Activated T-helper 1 cell treated with anti-CD3 and anti-CD28 coated beads, Interleukin-12 subunit alpha, Interleukin-12 subunit beta, Interleukin-2, Interleukin-4 antibody, amounts not matched to agents 30 ng/mL and 10 ng/mL and 1 ng/mL, durations not matched to agents 14 hours and 24 hours and 36 hours (primary cell): ENCODE measurements at regions of chr16 and their contacts with region 1.

Region 1: GRCh38 chr16:4548124-4548523 is 8.0 kb upstream of the C16orf96 start:
- DNase-seq: no peak
- H3K4me3 Mint-ChIP-seq: no peak overlapping the region
- H3K27ac Mint-ChIP-seq: no peak overlapping the region
- H3K4me1 Mint-ChIP-seq: peaks cover 10% of the 10 kb centered on the region
- H3K27me3 Mint-ChIP-seq: peaks cover 16% of the 10 kb centered on the region

Region 2: DNA sequence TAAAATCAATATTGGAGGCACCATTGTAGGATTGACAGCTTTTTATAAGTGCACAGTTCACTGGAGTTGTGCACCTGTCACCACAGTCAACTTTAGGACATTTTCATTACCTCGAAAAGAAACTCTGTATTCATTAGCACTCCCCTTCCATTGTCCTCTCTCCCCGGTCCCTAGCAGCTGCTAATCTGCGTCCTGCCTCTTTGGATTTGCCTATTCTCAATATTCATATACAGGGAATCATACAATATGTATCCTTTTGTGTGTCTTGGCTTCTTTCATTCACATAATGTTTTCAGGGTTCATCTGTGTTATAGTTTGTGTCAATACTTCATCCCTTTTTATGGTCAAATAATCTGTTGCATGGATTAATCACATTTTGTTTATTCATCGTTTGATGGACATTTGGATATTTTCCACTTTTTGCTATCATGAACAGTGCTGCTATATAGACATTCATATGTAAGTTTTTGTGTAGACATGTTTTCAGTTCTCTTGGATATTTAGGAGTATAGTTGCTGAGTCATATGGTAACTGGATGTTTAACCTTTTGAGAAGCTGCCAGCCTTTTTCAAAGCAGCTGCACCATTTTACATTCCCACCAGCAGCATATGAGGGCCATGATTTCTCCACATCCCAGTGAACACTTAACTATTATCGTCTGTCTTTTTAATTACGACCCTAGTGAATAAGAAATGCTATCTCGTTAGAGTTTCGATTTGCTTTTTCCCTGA is 112.6 kb before region 1 on chr16:
- intact Hi-C with region 1: no loop called
- DNase-seq: no peak
- H3K4me3 Mint-ChIP-seq: no peak overlapping the region
- H3K27ac Mint-ChIP-seq: no peak overlapping the region
- H3K4me1 Mint-ChIP-seq: peaks cover 7% of the 10 kb centered on the region
- H3K27me3 Mint-ChIP-seq: no peaks in the 10 kb centered on the region

Region 3: DNA sequence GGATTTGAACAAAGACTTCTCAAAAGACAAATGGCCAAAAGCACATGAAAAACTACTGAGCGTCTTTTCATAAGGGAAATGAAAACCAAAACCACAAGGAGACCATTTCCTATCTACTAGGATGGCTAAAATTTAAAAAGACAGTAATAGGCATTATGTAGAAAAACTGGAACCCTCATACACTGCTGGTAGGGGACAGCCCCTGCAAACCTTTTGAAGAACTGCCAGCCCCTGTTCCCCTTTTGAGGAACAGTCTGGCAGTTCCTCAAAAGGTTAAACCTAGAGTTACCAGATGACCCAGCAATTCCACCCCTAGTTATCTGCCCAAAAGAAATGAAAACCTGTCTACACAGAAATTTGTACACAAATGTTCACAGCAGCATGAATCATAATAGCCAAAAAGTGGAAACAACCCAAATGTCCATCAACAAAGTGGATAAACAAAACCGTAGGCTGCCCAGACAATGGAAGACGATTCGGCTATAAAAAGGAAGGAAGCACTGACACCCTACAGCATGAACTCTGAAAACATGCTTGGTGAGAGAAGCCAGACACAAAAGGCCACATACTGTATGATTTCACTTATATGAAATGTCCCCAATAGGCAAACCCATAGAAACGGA is 32.4 kb before region 1 on chr16:
- intact Hi-C with region 1: loop called (anchors 2 kb)
- DNase-seq: no peak
- H3K4me3 Mint-ChIP-seq: peak overlapping the region; percentile 69
- H3K27ac Mint-ChIP-seq: peak overlapping the region; percentile 82
- H3K4me1 Mint-ChIP-seq: peaks cover 22% of the 10 kb centered on the region
- H3K27me3 Mint-ChIP-seq: no peaks in the 10 kb centered on the region

Region 4: DNA sequence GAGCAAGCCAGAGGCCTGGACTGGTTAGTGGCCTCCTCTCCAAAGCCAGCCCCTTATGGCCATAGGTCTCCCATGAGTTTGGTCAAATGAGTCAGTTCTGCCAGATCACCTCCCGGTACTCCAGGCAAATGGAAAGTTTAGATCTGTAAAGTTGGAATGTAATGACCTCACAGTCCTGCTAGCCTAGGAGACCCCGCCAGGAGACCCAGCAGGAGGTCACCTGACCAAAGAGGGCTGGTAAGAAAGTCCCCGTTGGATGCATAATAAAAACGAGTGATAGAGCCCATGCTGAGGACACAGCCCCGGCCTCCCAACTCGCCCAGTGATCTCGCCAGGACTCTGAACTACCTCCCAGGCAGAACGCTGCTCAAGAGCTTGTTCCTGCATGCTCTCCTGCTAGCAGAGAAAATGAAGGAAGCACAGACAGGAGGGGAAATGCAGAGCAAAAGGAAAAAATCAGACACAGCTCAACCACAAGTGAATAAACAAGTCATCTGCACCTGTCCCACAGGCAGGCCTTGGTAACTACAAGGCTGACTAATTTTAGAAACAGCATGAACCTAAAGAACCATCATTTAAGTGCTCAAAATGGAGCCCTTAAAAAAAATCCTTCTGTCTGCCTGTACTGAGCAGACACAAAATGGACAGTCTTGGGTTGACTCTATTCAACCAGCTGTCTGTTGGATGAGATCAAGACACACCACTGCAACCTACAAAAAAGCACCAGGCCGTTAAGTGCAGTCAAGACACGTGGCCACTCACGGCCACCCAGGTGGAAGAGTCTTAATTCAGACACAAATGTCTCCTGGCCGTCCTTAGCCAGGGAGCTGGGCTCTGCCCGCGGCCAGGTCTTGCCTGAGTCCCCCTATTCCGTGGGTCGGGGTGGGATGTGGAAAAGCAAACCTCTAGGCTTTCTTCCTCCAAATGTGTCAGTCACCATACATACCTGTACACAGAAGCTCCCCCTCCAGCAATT is 18.8 kb before region 1 on chr16:
- intact Hi-C with region 1: loop called (anchors 2 kb)
- DNase-seq: no peak
- H3K4me3 Mint-ChIP-seq: peak overlapping the region; percentile 75
- H3K27ac Mint-ChIP-seq: peak overlapping the region; percentile 93
- H3K4me1 Mint-ChIP-seq: peaks cover 19% of the 10 kb centered on the region
- H3K27me3 Mint-ChIP-seq: no peaks in the 10 kb centered on the region